Activated CD8-positive, alpha-beta T cell treated with anti-CD3 and anti-CD28 coated beads for 36 hours (primary cell): ENCODE measurements at regions of chr2 and their contacts with region 1.

Region 1: DNA sequence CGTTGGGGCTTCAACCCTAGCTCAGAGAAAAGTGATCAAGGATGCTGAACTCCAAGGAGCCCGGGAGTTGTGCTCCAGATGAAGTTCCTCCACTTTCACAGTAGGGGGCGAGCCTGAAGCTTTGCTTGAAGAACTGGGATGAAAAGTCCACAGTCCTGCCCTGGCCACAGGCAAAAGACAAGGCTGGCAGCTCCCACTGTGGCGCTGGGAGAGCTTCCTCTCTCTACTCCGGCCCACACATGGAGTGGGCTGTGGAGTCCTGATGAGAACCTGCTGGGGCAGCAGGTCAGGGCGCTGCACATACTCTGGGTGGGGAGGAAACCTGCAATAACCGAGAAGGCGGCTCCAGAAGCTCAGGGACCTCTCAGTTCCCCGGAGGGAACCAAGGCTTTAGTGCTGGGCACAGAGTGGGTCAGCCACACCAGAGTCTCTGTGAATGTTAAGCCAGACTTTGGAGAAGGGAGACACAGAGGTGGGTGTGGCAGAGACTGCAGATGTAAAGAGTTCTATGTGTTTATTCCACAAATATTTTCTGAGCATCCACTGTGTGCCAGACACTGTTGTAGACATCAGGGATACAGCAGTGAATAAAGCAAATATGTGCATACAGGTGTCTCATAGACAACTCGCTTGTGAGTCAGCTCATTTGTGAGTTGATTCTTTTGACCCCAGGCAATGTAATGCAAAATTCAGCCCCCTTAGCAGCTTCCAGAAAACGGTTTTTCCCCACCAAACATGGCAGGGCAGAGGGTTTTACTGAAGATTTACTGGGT is 48.0 kb upstream of the MRPL33 start:
- DNase-seq: peak; percentile 30
- ATAC-seq: no peak
- H3K4me3 Mint-ChIP-seq: no peak overlapping the region
- H3K27ac Mint-ChIP-seq: no peak overlapping the region
- H3K4me1 Mint-ChIP-seq: peaks cover 28% of the 10 kb centered on the region
- H3K27me3 Mint-ChIP-seq: peaks cover 6% of the 10 kb centered on the region
- CTCF ChIP-seq: peak; percentile 77

Region 2: DNA sequence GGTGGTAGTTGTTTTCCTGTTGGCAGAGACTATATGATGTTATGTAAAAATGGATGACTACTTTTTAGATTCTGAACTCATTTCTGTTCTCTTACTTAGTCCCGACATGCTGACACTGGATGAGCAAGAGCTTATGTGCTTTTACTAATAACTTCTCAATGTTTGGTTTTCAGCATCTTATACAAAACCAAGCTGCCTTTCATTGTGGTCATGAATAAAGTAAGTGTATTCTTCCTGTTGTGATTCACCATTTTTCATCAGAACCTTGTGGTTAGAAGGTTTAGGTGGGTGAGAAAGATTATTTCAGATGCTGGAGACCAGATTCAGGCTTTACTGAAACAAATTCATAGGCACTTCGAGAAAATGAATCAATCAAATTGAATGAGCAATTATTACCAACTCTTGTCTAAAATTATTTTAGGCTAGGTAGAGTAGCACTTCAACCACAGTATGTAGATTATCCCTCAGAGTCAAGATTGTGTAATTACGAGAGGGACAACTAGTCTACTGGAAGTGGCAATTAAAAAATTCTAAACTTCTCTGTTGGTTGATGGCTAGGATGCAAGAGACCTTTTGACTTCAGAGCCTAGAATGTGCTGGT is 85.4 kb before region 1 on chr2:
- CTCF ChIA-PET with region 1: no interaction called
- POLR2A ChIA-PET with region 1: no interaction called
- intact Hi-C with region 1: no loop called
- DNase-seq: peak; percentile 33
- ATAC-seq: peak; percentile 89
- H3K4me3 Mint-ChIP-seq: peak overlapping the region; percentile 9
- H3K27ac Mint-ChIP-seq: peak overlapping the region; percentile 94
- H3K4me1 Mint-ChIP-seq: peaks cover 34% of the 10 kb centered on the region
- H3K27me3 Mint-ChIP-seq: no peaks in the 10 kb centered on the region
- CTCF ChIP-seq: no peak

Region 3: GRCh38 chr2:27735263-27735953 is 11.8 kb after region 1 on chr2:
- CTCF ChIA-PET with region 1: interaction called, 11 read pairs
- POLR2A ChIA-PET with region 1: interaction called, 4 read pairs
- intact Hi-C with region 1: no loop called
- DNase-seq: peak; percentile 82
- ATAC-seq: peak; percentile 94
- H3K4me3 Mint-ChIP-seq: peak overlapping the region; percentile 57
- H3K27ac Mint-ChIP-seq: peak overlapping the region; percentile 78
- H3K4me1 Mint-ChIP-seq: peaks cover 14% of the 10 kb centered on the region
- H3K27me3 Mint-ChIP-seq: no peaks in the 10 kb centered on the region
- CTCF ChIP-seq: no peak

Region 4: DNA sequence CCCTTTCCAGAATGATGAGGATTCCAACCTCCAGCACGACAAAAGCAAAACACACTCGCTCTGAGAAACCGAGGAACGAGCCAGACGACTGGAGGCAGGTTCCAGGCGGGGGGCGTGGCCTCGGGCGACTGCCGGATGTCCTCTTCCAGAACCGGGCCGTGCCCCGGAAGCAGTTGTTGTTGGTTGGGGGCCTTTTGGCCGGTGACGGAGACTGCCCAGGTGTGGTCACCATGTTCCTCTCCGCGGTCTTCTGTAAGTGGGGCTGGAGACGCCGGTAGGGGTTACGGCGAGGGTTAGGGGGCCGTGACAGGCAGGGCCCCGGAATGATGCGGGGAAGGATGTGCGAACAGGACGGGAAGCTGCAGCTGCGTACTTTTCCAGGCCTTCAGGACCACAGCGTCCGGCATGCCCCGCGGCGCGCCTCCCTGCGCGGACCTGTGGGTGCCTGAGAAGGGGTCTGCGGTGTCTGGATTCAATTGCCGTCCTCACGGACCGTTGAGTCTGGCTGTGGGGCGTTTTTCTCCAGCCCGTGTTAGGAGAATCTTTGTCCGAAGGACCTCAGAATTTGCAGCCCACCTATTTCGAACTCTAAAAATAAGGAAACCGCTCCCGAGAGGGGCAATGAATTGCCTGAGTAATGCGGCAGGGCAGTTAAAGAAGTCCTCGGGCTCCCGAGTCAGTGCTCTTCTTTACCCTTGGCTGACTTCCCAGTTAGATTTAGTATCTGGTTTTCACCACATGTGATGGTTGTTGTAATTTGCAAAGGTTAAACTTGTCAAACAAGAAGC is 48.2 kb after region 1 on chr2 and contains the start of gene MRPL33:
- CTCF ChIA-PET with region 1: interaction called, 12 read pairs
- POLR2A ChIA-PET with region 1: no interaction called
- intact Hi-C with region 1: no loop called
- DNase-seq: peak; percentile 96
- ATAC-seq: peak; percentile 98
- H3K4me3 Mint-ChIP-seq: peak within 1 kb of the TSS; percentile 95
- H3K27ac Mint-ChIP-seq: peak within 1 kb of the TSS; percentile 98
- H3K4me1 Mint-ChIP-seq: peaks cover 36% of the 10 kb centered on the region
- H3K27me3 Mint-ChIP-seq: no peaks in the 10 kb centered on the region
- CTCF ChIP-seq: no peak
- total RNA-seq, gene MRPL33: 54.6 to 59.2 TPM